T-cell (primary cell): ENCODE measurements at regions of chr1 and their contacts with region 1.

Region 1: DNA sequence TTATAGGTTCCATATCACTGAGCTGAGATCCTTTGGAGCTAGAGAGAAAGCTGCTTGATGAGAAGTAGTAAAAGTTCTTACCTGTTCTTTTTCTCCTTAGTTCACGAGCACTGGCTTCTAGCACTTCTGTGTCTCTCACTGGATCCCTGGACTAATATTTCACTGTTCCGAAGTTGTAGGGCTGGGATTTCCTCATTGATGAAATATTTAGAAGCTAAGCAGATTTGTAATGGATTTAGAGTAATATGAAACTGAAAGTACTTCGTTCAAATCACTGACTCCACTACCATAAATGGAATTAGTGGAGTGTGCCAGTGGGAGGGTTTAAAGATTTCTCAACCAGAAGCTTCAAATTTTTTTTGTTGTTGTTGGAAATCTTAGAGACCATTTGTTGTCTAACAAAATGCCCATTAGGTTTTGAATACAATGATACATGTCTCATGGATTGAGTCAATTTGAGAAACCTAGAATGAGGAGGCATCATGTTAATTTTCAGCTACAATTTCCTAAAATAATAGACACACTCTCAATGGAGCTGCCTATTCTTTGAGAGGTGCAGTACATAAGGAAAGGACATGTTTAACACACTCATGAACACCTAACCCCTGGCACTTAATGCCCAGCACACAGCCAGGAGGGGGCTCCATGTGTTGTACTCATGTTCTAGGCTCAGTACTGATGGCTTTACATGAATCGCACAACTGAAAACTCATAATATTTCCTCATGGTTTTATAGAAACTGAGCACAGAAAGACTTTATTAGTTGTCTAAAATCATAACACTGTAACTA is at the start of gene GBP1:
- DNase-seq: peak in 7 of 35 experiments; percentile 5 to 69 (median 15)
- ATAC-seq: peak; percentile 78 to 87 (median 82)
- H3K4me3 ChIP-seq: peak within 1 kb of the TSS; percentile 70 to 77
- H3K4me3 Mint-ChIP-seq: peak within 1 kb of the TSS; percentile 94 to 98 (median 96)
- H3K27ac ChIP-seq: peak within 1 kb of the TSS; percentile 93
- H3K27ac Mint-ChIP-seq: peak within 1 kb of the TSS; percentile 97 to 99
- H3K4me1 ChIP-seq: peaks cover 10 to 27% of the 10 kb centered on the region in 2 experiments
- H3K4me1 Mint-ChIP-seq: peaks cover 61 to 70% (median 64%) of the 10 kb centered on the region in 3 donors
- H3K27me3 ChIP-seq: no peaks in the 10 kb centered on the region
- H3K27me3 Mint-ChIP-seq: no peaks in the 10 kb centered on the region
- total RNA-seq, gene GBP1: 29.5 to 57.8 (median 53.5) TPM

Region 2: GRCh38 chr1:88291611-88292354 is 773.5 kb before region 1 on chr1:
- CTCF ChIA-PET with region 1: no interaction called
- POLR2A ChIA-PET with region 1: no interaction called
- DNase-seq: no peak
- ATAC-seq: no peak
- H3K4me3 ChIP-seq: no peak overlapping the region
- H3K4me3 Mint-ChIP-seq: no peak overlapping the region
- H3K27ac ChIP-seq: no peak overlapping the region
- H3K27ac Mint-ChIP-seq: no peak overlapping the region
- H3K4me1 ChIP-seq: no peaks in the 10 kb centered on the region
- H3K4me1 Mint-ChIP-seq: no peaks in the 10 kb centered on the region
- H3K27me3 ChIP-seq: no peaks in the 10 kb centered on the region
- H3K27me3 Mint-ChIP-seq: peaks cover 2 to 3% of the 10 kb centered on the region in 2 donors

Region 3: DNA sequence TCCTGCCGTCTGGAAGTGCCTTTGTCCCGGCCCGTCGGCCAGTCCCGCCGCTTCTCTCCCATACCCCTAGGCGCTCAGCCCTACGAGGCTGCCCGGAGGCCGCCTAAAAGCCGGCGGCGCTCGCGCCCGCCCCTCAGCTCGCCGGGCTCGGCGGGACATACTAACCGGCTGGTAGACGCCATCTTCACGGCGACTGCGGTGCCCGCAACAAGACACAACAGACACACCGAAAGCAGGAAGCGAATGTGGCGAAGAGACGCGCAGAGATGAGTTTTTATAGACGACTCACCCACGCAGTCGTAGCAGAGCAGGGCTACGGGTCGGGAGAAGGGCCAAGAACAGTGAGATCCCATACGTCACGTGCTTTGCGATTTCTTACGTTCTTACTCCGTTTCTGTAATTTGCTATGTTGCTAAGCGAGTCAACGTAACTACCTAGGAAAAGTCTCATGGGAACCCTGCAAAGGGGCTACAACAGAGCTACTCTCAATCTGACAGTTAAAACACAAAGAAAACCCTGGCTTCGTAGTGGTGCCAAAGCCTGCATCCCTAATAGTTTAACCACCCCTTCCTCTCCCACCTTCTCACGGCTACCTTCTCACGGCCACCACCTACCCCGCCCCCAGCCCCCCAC is 173.8 kb before region 1 on chr1 and contains the start of gene GTF2B:
- CTCF ChIA-PET with region 1: no interaction called
- POLR2A ChIA-PET with region 1: interaction called in 1 of 2 experiments, 11 read pairs
- DNase-seq: peak; percentile 84 to 98 (median 93)
- ATAC-seq: peak; percentile 87 to 93 (median 90)
- H3K4me3 ChIP-seq: peak within 1 kb of the TSS; percentile 94 to 100
- H3K4me3 Mint-ChIP-seq: peak within 1 kb of the TSS; percentile 86 to 99 (median 97)
- H3K27ac ChIP-seq: peak within 1 kb of the TSS; percentile 86
- H3K27ac Mint-ChIP-seq: peak within 1 kb of the TSS; percentile 93 to 98
- H3K4me1 ChIP-seq: peaks cover 14 to 22% of the 10 kb centered on the region in 2 experiments
- H3K4me1 Mint-ChIP-seq: peaks cover 44 to 46% (median 45%) of the 10 kb centered on the region in 3 donors
- H3K27me3 ChIP-seq: no peaks in the 10 kb centered on the region
- H3K27me3 Mint-ChIP-seq: no peaks in the 10 kb centered on the region
- total RNA-seq, gene GTF2B: 34.2 to 54.5 (median 38.7) TPM